ENCODE measurements at regions of chr7 and their contacts with region 1.

Region 1: DNA sequence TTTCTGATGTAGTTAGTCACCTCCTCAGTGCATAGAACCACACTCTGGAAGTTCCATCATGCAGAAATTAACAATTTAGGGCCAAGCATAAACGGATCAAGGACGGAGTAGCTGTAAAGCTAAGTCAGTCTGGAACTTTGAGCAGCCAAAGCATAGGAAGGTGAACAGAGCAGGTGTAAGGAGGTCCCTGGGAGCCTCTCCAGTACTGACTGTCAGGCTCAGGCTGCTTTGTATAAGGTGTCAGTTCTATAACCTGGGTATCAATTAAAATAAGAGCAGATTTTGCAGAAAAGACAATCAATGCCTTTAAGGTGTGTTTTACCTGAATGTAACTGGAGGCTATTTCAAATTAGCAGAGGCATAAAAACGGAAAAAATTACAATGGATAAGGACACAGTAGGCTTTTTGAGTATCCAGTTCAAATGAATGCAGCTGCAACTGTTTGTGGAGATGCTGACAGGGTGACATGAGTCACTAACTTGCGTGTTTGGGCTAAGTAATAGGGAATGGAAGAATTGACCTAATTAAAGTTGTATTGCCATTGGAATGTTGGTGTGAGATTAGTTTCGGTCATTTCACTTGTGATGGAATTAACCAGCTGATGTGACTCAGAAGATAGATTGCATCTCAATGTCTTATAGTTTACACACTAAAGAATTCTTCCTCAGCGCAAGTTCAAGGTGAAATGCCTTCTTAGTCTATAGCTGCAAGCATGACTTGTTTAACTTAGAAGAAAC is 417.9 kb upstream of the CNTNAP2 start:
- DNase-seq: peak; percentile 3
- H3K4me3 Mint-ChIP-seq: no peak overlapping the region
- H3K27ac Mint-ChIP-seq: no peak overlapping the region
- H3K4me1 Mint-ChIP-seq: no peaks in the 10 kb centered on the region
- H3K27me3 Mint-ChIP-seq: no peaks in the 10 kb centered on the region
- CTCF ChIP-seq: no peak

Region 2: DNA sequence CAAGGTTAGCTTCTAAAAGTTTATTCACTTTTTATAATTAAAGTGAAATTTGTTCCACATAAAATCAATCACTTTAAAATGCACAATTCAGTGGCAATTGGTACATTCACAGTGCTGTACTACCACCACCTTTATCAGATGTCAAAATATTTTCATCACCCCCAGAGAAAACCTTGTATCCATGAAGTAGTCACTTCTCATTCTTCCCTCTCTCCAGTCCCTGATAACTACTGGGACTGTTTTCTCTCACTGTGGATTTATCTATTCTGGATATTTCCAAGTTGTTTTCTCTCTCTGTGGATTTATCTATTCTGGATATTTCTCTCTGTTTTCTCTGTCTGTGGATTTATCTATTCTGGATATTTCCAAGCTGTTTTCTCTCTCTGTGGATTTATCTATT is 17.5 kb before region 1 on chr7:
- CTCF ChIA-PET with region 1: no interaction called
- POLR2A ChIA-PET with region 1: no interaction called
- intact Hi-C with region 1: loop called (anchors 1 kb)
- DNase-seq: no peak
- H3K4me3 Mint-ChIP-seq: no peak overlapping the region
- H3K27ac Mint-ChIP-seq: no peak overlapping the region
- H3K4me1 Mint-ChIP-seq: no peaks in the 10 kb centered on the region
- H3K27me3 Mint-ChIP-seq: peaks cover 81% of the 10 kb centered on the region
- CTCF ChIP-seq: no peak

Measured in MCF 10A (cell line).